ENCODE measurements at regions of chr12 and their contacts with region 1.

Region 1: GRCh38 chr12:130298322-130299021 is 39.2 kb upstream of the PIWIL1 start:
- DNase-seq: no peak
- ATAC-seq: no peak
- H3K4me3 Mint-ChIP-seq: no peak overlapping the region
- H3K27ac Mint-ChIP-seq: no peak overlapping the region
- H3K4me1 Mint-ChIP-seq: no peaks in the 10 kb centered on the region
- H3K27me3 Mint-ChIP-seq: peaks cover 4% of the 10 kb centered on the region

Region 2: GRCh38 chr12:130031571-130032189 is 266.8 kb before region 1 on chr12:
- CTCF ChIA-PET with region 1: no interaction called
- POLR2A ChIA-PET with region 1: interaction called, 12 read pairs
- intact Hi-C with region 1: no loop called
- DNase-seq: peak; percentile 81
- ATAC-seq: no peak
- H3K4me3 Mint-ChIP-seq: no peak overlapping the region
- H3K27ac Mint-ChIP-seq: no peak overlapping the region
- H3K4me1 Mint-ChIP-seq: no peaks in the 10 kb centered on the region
- H3K27me3 Mint-ChIP-seq: peaks cover 23% of the 10 kb centered on the region

Measured in activated CD4-positive, alpha-beta T cell treated with anti-CD3 and anti-CD28 coated beads for 36 hours (primary cell).